Activated CD4-positive, alpha-beta memory T cell treated with anti-CD3 and anti-CD28 coated beads for 36 hours (primary cell): ENCODE measurements at regions of chr9 and their contacts with region 1.

Region 1: DNA sequence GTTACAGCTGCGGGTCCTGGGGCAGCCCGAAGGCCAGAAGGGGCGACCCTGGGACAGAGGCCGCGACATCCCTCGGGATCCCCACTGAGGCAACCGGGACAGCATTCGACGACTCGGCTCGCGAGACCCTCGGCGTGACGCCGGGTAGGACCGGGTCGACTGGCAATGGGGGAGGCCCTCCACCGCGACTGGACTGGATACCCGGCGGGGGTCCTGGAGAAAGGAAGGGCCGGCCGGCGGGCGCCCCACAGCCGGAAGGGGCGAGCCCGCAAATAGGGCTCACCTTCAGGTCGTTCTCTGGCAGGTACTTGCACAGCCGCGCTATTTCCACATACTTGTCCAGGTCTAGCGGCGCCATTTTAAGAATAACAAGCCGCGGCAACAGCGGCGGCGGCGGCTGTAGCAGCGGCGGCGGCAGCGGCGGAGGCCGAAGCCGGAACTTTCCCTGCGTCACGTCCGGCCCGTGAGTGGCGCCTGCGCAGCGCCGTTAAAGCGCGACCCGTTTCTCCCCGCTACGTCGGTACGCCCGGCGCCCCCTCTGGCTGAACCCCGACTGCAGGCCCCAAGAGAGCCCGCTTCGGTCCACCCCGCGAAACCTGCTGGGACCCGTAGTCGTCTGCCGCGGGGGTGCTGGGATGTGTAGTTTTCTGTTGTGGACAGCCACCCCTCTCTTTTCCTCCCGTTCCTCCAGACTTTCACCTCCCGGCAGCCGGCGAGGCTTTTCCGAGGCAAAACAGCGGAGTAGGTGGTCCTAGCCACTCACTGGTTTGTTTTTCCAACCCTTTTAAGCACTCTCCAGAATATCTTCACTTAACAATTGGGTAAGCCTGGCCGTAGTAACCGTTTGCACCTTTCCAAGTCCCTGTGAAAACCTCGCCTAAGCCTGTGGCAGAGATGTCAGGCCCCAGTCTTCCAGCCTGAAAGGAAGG is at the start of gene PPP6C:
- DNase-seq: peak; percentile 99
- H3K4me3 Mint-ChIP-seq: peak within 1 kb of the TSS; percentile 97
- H3K27ac Mint-ChIP-seq: peak within 1 kb of the TSS; percentile 95
- H3K4me1 Mint-ChIP-seq: peaks cover 54% of the 10 kb centered on the region
- H3K27me3 Mint-ChIP-seq: no peaks in the 10 kb centered on the region
- total RNA-seq, gene PPP6C: 46.7 to 47.4 TPM

Region 2: DNA sequence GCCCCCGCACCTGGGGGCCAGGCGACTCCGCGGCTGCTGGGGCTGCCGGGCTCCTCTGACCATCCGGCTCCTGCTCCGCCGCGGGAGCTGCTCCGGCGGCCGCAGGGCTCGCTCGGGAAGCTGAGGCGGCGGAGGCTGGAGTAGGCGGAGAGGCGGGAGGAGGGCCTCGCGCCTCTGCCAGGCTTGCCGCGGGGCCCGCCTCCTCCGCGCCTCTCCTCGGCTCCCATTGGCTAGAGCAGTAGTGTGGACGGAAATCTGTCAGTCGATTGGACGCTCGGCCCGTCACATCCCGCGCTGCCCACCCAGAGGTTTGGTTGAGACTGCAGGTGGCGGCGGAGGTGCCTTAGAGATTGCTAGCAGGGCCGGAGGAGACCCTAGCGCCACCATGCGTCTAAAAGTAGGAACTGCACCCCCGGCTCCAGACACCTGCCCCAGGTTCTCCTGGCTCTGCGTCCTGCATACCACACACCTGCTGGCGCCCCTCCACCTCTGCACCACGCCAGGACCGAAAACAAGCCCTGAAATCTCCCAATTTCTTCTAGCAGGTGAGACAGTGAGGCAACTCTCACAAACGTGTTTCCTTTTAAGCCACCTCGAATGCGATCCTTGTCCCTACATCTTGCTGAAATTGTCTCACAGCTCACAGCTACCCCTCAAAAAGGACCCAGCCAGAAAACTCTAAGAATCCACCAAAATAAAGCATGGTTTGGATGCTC is 46.1 kb before region 1 on chr9 and contains the start of gene SCAI:
- CTCF ChIA-PET with region 1: no interaction called
- POLR2A ChIA-PET with region 1: no interaction called
- intact Hi-C with region 1: loop called (anchors 5 kb)
- DNase-seq: peak; percentile 99
- H3K4me3 Mint-ChIP-seq: peak within 1 kb of the TSS; percentile 82
- H3K27ac Mint-ChIP-seq: peak within 1 kb of the TSS; percentile 24
- H3K4me1 Mint-ChIP-seq: peaks cover 31% of the 10 kb centered on the region
- H3K27me3 Mint-ChIP-seq: no peaks in the 10 kb centered on the region
- total RNA-seq, gene SCAI: 9.0 to 10.8 TPM

Region 3: DNA sequence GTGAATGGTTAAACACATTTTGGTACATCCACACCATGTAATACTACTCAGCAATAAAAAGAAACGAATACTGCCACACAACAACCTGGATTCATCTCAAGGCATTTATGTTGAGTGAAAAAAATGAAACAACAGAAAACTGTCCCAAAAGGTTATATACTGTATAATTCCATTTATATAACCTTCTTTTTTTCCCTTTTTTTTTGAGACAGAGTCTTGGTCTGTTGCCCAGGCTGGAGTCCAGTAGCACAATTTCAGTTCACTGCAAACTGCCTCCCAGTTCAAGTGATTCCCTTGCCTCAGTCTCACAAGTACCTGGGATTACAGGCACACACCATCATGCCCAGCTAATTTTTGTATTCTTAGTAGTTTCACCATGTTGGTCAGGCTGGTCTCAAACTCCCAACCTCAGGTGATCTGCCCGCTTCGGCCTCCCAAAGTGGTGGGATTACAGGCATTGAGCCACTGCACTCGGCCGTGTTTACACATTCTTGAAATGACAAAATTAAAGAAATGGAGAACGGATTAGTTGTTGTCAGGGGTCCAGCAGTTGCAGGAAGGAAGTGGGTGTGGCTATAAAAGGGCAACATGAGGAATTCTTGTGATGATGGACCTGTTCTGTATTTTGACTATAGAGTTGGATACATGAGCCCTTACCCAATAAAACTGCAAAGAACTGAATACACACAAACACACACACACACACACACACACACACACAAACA is 17.4 kb before region 1 on chr9:
- CTCF ChIA-PET with region 1: no interaction called
- POLR2A ChIA-PET with region 1: no interaction called
- intact Hi-C with region 1: no loop called
- DNase-seq: no peak
- H3K4me3 Mint-ChIP-seq: no peak overlapping the region
- H3K27ac Mint-ChIP-seq: peak overlapping the region; percentile 44
- H3K4me1 Mint-ChIP-seq: peaks cover 35% of the 10 kb centered on the region
- H3K27me3 Mint-ChIP-seq: no peaks in the 10 kb centered on the region

Region 4: GRCh38 chr9:125200210-125201047 is 10.8 kb after region 1 on chr9 and contains the start of gene RABEPK:
- CTCF ChIA-PET with region 1: interaction called, 4 read pairs
- POLR2A ChIA-PET with region 1: interaction called, 15 read pairs
- intact Hi-C with region 1: loop called (anchors 1 kb)
- DNase-seq: peak; percentile 94
- H3K4me3 Mint-ChIP-seq: peak within 1 kb of the TSS; percentile 90
- H3K27ac Mint-ChIP-seq: peak within 1 kb of the TSS; percentile 84
- H3K4me1 Mint-ChIP-seq: peaks cover 34% of the 10 kb centered on the region
- H3K27me3 Mint-ChIP-seq: no peaks in the 10 kb centered on the region
- total RNA-seq, gene RABEPK: 20.7 to 21.9 TPM

Region 5: GRCh38 chr9:125261501-125262293 is 72.1 kb after region 1 on chr9 and contains the start of gene GAPVD1:
- CTCF ChIA-PET with region 1: interaction called, 6 read pairs
- POLR2A ChIA-PET with region 1: no interaction called
- intact Hi-C with region 1: loop called (anchors 2 kb)
- DNase-seq: peak; percentile 94
- H3K4me3 Mint-ChIP-seq: peak within 1 kb of the TSS; percentile 99
- H3K27ac Mint-ChIP-seq: peak within 1 kb of the TSS; percentile 93
- H3K4me1 Mint-ChIP-seq: peaks cover 45% of the 10 kb centered on the region
- H3K27me3 Mint-ChIP-seq: peaks cover 2% of the 10 kb centered on the region
- total RNA-seq, gene GAPVD1: 42.2 to 46.8 TPM

Region 6: GRCh38 chr9:125332527-125332926 is 142.9 kb after region 1 on chr9:
- CTCF ChIA-PET with region 1: no interaction called
- POLR2A ChIA-PET with region 1: no interaction called
- intact Hi-C with region 1: no loop called
- DNase-seq: peak; percentile 69
- H3K4me3 Mint-ChIP-seq: no peak overlapping the region
- H3K27ac Mint-ChIP-seq: peak overlapping the region; percentile 7
- H3K4me1 Mint-ChIP-seq: peaks cover 16% of the 10 kb centered on the region
- H3K27me3 Mint-ChIP-seq: no peaks in the 10 kb centered on the region